Activated T-helper 1 cell treated with anti-CD3 and anti-CD28 coated beads, Interleukin-12 subunit alpha, Interleukin-12 subunit beta, Interleukin-2, Interleukin-4 antibody, amounts not matched to agents 30 ng/mL and 10 ng/mL and 1 ng/mL, durations not matched to agents 14 hours and 24 hours and 36 hours (primary cell): ENCODE measurements at regions of chr7 and their contacts with region 1.

Region 1: GRCh38 chr7:134920026-134920753 is 66.1 kb upstream of the AGBL3 start:
- DNase-seq: no peak
- H3K4me3 Mint-ChIP-seq: no peak overlapping the region
- H3K27ac Mint-ChIP-seq: no peak overlapping the region
- H3K4me1 Mint-ChIP-seq: no peaks in the 10 kb centered on the region
- H3K27me3 Mint-ChIP-seq: peaks cover 4% of the 10 kb centered on the region

Region 2: DNA sequence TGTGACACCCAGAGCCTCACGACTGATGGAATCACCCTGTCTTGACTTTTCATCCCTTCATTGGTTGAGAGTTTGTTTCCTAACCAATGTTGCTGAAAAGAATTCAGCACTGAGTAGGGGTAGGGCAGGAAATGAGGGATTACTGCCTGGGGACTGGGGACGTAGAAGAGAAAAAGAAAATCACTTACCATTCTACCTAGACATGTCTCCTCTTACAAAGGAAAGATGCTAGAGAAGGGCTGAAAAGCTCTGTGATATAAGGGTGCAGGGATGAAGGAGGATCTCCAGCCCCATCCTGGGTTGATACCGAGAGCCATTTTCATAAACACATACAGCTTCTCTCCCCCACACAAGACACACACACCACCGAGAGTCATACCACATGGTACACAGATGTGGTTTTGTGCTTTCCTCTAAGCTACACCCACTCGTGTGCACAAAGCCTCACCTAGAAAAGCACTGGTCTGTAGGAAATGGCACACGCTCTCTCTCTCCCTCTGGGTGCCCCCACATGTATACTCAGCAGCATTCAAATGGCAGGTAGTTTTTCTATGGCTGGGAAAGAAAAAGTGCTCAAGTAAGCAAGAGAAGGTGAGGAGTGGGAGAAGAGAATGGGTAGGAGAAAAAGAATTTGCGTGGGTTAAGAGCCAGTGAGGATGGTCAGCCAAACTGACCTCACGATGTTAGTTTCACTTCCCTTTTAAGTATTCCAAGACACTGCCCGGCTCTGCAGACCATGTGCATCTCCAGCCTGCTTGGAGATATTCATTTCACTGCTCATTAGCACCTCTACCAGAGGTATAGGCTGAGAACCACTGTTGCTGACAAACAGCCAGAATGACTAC is 55.0 kb before region 1 on chr7:
- intact Hi-C with region 1: loop called (anchors 1 kb)
- DNase-seq: peak; percentile 44
- H3K4me3 Mint-ChIP-seq: peak overlapping the region; percentile 8
- H3K27ac Mint-ChIP-seq: peak overlapping the region; percentile 49
- H3K4me1 Mint-ChIP-seq: peaks cover 30% of the 10 kb centered on the region
- H3K27me3 Mint-ChIP-seq: no peaks in the 10 kb centered on the region

Region 3: DNA sequence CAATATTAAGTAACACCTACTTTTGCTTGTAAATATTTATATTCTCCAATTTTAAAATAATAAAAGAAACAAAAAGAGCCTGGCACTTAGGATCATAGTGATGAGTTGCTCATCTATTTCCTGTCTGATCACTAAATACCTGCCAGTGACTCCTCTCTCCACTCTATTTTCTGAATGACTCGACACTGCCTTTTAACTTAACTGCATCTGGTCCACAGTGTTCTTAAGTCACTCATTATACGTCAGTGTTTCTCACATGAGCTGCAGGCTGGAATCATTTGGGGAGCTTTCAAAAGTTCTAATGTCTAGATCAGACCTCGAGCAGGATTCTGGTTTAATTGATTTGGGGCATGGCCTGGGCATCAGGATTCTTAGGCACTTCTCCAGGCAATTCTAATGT is 11.9 kb before region 1 on chr7:
- intact Hi-C with region 1: loop called (anchors 1 kb)
- DNase-seq: no peak
- H3K4me3 Mint-ChIP-seq: no peak overlapping the region
- H3K27ac Mint-ChIP-seq: no peak overlapping the region
- H3K4me1 Mint-ChIP-seq: peaks cover 12% of the 10 kb centered on the region
- H3K27me3 Mint-ChIP-seq: no peaks in the 10 kb centered on the region